Prostate gland (tissue), 2 donors: ENCODE measurements at regions of chr3 and their contacts with region 1.

Region 1: DNA sequence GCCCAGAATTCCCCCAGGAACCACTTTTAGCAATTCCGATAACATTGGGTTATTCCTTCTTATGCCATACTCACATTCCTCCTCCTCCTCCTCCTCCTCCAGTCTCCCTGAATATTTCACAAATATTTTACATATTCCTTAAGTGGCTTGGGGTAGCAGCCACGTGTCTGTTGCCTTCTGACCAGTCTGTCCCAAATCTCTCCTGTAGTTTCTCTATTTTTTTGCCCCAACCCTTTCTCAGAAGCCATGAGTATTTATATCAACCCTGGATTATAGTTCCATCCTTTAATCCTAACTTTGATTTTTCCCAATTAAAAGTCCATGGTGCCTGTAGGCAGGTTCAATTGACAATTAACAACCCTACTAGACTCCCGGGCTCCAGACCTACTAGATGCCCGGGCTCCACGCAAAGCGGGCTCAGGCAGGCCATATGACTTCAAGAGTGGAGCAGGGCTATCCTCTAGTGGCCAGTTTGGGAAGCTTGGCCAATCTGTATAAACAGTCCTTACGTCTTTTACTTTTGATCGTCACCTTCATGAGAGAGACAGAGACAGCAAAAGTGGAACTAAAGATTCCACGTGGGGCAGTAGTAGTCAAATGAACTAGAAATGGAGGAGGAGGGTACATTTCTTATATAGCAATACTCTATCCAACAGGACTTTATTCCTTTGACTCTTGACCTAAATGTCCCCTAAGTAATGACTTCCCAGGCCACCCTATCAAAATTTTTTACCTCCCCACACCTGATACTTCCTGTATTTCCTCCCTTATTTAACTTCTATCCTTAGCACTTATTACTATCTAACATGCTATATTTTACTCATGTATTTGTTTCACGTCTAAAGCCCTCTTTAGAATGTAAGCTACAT is 69.7 kb downstream of the USF3 start:
- DNase-seq: peak; percentile 34
- H3K4me3 ChIP-seq: no peak overlapping the region
- H3K27ac ChIP-seq: no peak overlapping the region
- H3K4me1 ChIP-seq: no peaks in the 10 kb centered on the region
- H3K27me3 ChIP-seq: no peaks in the 10 kb centered on the region
- CTCF ChIP-seq: peak; percentile 25 to 79 (median 62)
- POLR2A ChIP-seq: no peak

Region 2: GRCh38 chr3:113495035-113495434 is 131.7 kb before region 1 on chr3:
- intact Hi-C with region 1: loop called (anchors 5 kb)
- DNase-seq: peak; percentile 35
- H3K4me3 ChIP-seq: no peak overlapping the region
- H3K27ac ChIP-seq: no peak overlapping the region
- H3K4me1 ChIP-seq: no peaks in the 10 kb centered on the region
- H3K27me3 ChIP-seq: no peaks in the 10 kb centered on the region
- CTCF ChIP-seq: peak in 3 of 4 experiments; percentile 48 to 65 (median 65)
- POLR2A ChIP-seq: no peak

Region 3: GRCh38 chr3:113736548-113737089 is 109.9 kb after region 1 on chr3:
- intact Hi-C with region 1: loop called (anchors 10 kb)
- DNase-seq: peak; percentile 4
- H3K4me3 ChIP-seq: no peak overlapping the region
- H3K27ac ChIP-seq: no peak overlapping the region
- H3K4me1 ChIP-seq: peaks cover 3% of the 10 kb centered on the region
- H3K27me3 ChIP-seq: no peaks in the 10 kb centered on the region
- CTCF ChIP-seq: peak; percentile 17 to 80 (median 70)
- POLR2A ChIP-seq: no peak